AG04450 (cell line): ENCODE measurements at regions of chr9 and their contacts with region 1.

Region 1: GRCh38 chr9:115591584-115591984 is 473.6 kb upstream of the TNC start:
- DNase-seq: peak; percentile 99
- H3K4me3 ChIP-seq: no peak overlapping the region
- H3K27ac ChIP-seq: peak overlapping the region; percentile 88
- H3K27me3 ChIP-seq: no peaks in the 10 kb centered on the region
- CTCF ChIP-seq: peak; percentile 94

Region 2: DNA sequence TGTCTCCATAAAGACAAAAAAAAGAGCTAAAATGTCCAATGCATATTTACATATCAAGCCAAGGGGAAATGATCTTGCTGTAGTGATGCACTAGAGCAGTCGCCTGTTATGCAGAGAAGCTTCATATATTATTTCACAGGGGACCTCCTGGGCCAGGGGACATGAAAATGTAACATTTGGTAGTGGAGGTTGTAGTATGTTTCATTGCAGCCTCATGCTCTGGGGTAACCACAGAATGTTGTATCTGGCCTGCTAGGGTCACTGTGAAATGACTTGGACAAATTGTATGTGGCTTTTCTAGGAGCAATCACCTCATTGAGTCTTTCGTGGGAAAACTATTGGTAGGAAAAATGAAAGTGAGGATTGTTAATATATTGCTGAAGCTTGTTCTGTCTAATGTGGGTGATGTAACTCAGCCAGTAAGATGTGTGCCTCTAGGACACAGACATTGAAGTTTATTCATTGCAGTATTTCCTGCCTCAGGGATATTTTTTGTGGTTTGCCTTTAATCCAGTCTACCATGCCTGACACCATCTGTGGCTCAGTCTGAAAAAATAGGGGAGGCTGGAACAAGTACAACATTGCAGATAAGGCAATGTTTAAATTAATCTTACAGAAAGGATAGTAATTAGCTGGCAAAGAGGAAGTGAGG is 42.8 kb before region 1 on chr9:
- CTCF ChIA-PET with region 1: no interaction called
- POLR2A ChIA-PET with region 1: no interaction called
- DNase-seq: no peak
- H3K4me3 ChIP-seq: no peak overlapping the region
- H3K27ac ChIP-seq: no peak overlapping the region
- H3K27me3 ChIP-seq: no peaks in the 10 kb centered on the region
- CTCF ChIP-seq: no peak

Region 3: GRCh38 chr9:115665519-115665918 is 73.9 kb after region 1 on chr9:
- CTCF ChIA-PET with region 1: interaction called, 10 read pairs
- POLR2A ChIA-PET with region 1: interaction called, 5 read pairs
- DNase-seq: no peak
- H3K4me3 ChIP-seq: no peak overlapping the region
- H3K27ac ChIP-seq: no peak overlapping the region
- H3K27me3 ChIP-seq: no peaks in the 10 kb centered on the region
- CTCF ChIP-seq: no peak

Region 4: DNA sequence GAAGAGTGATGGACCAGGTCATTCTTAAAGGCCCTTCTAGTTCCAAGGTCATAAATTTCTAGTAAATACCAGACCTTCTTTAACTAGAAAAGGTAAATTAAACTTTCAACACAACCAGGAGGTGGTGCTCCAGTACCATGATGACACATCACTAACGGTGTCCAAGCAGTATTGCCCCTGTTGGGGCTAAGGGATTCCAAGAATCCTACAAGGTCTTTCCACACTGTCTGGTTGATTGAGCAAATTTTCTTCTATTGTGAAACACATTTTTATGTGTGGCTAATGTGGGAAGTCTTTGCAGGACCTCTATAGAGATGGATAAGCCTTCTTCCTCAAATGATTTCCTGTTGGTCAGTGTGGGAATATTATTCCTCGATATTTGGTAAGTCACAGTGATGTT is 102.4 kb after region 1 on chr9:
- CTCF ChIA-PET with region 1: interaction called, 35 read pairs
- POLR2A ChIA-PET with region 1: no interaction called
- DNase-seq: peak; percentile 78
- H3K4me3 ChIP-seq: no peak overlapping the region
- H3K27ac ChIP-seq: no peak overlapping the region
- H3K27me3 ChIP-seq: no peaks in the 10 kb centered on the region
- CTCF ChIP-seq: peak; percentile 54

Region 5: GRCh38 chr9:115921301-115921700 is 329.7 kb after region 1 on chr9:
- CTCF ChIA-PET with region 1: no interaction called
- POLR2A ChIA-PET with region 1: no interaction called
- DNase-seq: no peak
- H3K4me3 ChIP-seq: no peak overlapping the region
- H3K27ac ChIP-seq: no peak overlapping the region
- H3K27me3 ChIP-seq: no peaks in the 10 kb centered on the region
- CTCF ChIP-seq: no peak

Region 6: DNA sequence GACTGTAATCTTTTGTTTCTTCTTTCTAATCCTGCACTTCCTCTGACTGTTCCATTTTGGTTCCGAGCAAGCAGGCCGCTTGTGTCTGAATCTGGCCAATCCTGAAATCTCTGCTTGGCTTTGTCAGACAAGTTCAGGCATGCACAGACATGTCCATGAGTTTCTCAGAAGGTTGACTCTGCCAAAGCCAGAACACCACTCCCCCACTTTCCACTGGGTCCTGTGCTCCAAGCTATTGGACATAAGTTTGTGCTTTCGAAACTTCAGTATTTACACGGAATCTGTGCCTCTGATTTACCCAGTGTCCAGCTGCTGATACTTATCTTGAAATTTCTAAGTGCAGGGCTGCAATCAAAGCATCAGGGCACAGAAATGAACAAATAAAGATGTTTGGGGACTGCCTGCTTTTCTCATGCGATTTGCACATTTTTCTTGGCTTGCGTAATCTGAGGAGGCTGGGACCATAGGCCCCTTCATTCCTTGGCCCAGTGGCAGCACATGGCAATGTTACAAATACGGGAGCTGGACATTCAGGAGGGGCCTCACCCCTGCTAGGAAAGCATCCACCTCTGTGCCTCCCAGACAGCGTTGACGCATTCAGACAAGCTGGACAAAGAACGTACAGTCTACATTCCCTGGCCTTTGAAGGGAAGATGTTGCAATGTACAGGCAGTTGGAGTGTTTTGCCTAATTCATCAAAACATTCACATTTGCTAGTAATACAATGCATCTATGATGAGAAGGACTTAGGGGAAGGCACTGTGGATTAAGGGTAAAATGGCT is 352.8 kb after region 1 on chr9:
- CTCF ChIA-PET with region 1: interaction called, 12 read pairs
- POLR2A ChIA-PET with region 1: interaction called, 8 read pairs
- DNase-seq: peak; percentile 99
- H3K4me3 ChIP-seq: no peak overlapping the region
- H3K27ac ChIP-seq: peak overlapping the region; percentile 96
- H3K27me3 ChIP-seq: no peaks in the 10 kb centered on the region
- CTCF ChIP-seq: no peak

Region 7: GRCh38 chr9:116572095-116572748 is 980.6 kb after region 1 on chr9:
- CTCF ChIA-PET with region 1: interaction called, 29 read pairs
- POLR2A ChIA-PET with region 1: interaction called, 3 read pairs
- DNase-seq: peak; percentile 81
- H3K4me3 ChIP-seq: no peak overlapping the region
- H3K27ac ChIP-seq: no peak overlapping the region
- H3K27me3 ChIP-seq: no peaks in the 10 kb centered on the region
- CTCF ChIP-seq: peak; percentile 98

Region 8: DNA sequence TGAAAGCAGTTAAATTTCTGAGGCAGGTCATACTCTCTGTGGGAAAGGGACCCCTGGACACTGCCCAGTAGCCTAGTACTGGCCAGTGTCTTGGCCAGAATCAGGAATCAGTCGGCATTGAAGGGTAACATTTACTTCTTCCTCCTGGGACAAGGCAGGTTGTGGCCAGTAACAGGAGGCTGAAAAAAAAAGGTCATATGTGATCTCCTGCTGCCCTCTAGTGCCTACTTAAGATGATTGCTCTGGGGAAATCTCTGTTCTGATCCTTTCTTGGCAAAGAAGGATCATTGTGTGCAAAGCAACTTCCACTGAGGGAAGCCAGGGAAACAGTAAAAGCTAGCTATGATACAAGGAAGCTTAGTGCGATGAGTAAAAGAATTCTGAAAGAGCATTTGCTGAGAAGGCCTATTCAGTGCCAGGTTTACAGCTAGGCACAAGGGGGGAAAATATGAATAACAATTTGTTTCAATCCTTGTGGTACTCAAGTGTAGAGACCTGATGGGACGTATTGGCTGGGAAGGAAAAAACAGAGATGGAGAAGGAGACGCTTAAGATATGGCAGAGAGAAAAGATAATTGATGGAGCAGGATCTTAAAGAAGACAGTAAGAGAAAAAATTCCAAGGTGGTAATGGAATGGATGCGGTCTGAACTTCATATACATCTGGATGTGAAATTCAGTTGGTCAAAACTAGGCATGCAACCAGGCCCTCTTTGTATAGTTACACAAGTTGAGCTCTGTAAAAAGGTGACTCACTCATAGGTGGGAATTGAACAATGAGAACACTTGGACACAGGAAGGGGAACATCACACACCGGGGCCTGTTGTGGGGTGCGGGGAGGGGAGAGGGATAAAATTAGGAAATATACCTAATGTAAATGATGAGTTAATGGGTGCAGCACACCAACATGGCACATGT is 1069.7 kb after region 1 on chr9:
- CTCF ChIA-PET with region 1: interaction called, 13 read pairs
- POLR2A ChIA-PET with region 1: no interaction called
- DNase-seq: peak; percentile 74
- H3K4me3 ChIP-seq: no peak overlapping the region
- H3K27ac ChIP-seq: no peak overlapping the region
- H3K27me3 ChIP-seq: no peaks in the 10 kb centered on the region
- CTCF ChIP-seq: peak; percentile 82